ENCODE measurements at regions of chr2 and their contacts with region 1.

Region 1: GRCh38 chr2:177332041-177332991 is 60.3 kb upstream of the AGPS start:
- DNase-seq: no peak
- H3K4me3 ChIP-seq: no peak overlapping the region
- H3K27me3 ChIP-seq: no peaks in the 10 kb centered on the region; the same call in 1 of the 2 replicates
- CTCF ChIP-seq: peak; percentile 60

Region 2: DNA sequence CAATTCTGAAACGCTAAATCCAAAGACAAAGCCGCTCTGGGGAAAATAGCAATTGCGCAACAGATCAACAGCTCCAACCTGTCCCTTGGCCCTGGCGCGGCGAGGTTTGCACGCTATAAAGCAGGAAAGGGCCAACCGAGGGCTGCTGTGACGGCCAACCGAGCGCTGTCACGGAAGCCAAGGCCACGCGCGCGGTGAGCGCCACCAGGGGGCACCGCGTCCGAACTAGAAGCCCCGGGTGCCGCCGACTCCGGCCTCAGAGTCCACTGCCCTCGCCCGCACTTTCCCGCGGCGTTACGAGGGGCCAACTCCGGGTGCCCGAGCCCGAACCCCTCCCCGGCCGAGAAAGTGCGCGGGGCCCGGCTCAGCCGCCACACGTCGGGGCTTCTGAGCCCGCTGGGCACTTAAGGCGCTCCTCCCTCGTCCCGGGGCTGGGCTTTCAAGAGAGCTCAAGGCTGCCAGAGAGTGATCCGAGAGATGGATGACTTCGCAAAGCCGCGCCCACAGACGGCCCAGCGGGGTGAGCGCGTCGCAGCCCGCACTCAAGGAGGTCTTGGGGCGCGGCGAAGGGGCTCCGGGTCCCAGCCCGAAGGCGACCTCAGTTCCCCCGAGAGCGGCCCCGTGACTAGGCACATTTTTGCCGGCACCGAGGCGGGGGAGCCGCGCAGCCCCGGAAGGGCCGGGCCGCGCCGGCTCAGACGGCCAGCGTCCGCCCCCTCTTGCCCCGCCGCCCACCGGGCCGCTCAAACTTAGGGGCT is 68.7 kb before region 1 on chr2:
- CTCF ChIA-PET with region 1: interaction called, 31 read pairs
- POLR2A ChIA-PET with region 1: no interaction called
- DNase-seq: peak; percentile 78
- H3K4me3 ChIP-seq: peak overlapping the region; percentile 88
- H3K27me3 ChIP-seq: no peaks in the 10 kb centered on the region
- CTCF ChIP-seq: peak; percentile 91

Region 3: GRCh38 chr2:177320596-177320995 is 11.7 kb before region 1 on chr2:
- CTCF ChIA-PET with region 1: no interaction called
- POLR2A ChIA-PET with region 1: no interaction called
- DNase-seq: no peak
- H3K4me3 ChIP-seq: no peak overlapping the region
- H3K27me3 ChIP-seq: no peaks in the 10 kb centered on the region
- CTCF ChIP-seq: no peak

Region 4: DNA sequence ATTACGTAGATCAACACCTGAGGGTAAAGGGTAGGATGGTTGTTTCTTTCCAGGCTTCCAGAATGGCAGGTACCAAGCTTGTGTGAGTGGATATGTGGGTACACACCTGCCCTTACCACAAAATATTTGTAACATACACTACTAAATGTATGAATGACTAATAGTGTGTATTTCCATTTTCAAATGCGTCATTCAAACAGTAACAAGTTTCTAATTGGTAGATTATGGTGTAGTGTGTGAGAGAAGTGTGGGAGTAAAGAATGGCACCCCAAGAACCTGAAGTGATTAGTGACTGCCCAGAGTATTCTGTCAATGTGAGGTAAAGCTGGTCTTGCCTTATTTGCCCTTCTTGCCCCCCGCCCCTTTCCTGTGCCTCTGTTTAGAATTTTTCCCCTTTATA is 81.4 kb after region 1 on chr2:
- CTCF ChIA-PET with region 1: interaction called, 78 read pairs
- POLR2A ChIA-PET with region 1: no interaction called
- DNase-seq: no peak
- H3K4me3 ChIP-seq: no peak overlapping the region
- H3K27me3 ChIP-seq: no peaks in the 10 kb centered on the region
- CTCF ChIP-seq: no peak

Region 5: GRCh38 chr2:177724398-177725287 is 392.3 kb after region 1 on chr2:
- CTCF ChIA-PET with region 1: interaction called, 23 read pairs
- POLR2A ChIA-PET with region 1: no interaction called
- DNase-seq: no peak
- H3K4me3 ChIP-seq: no peak overlapping the region
- H3K27me3 ChIP-seq: peaks cover 3% of the 10 kb centered on the region; the same call in 1 of the 2 replicates
- CTCF ChIP-seq: peak; percentile 92

Measured in BJ (cell line).